ENCODE measurements at regions of chr2 and their contacts with region 1.

Region 1: GRCh38 chr2:197857476-197858107 is 53.2 kb downstream of the PLCL1 start:
- DNase-seq: no peak
- ATAC-seq: peak in 1 of 8 donors; percentile 27
- H3K4me3 ChIP-seq: no peak overlapping the region
- H3K27ac ChIP-seq: peak overlapping the region in 1 of 10 donors; percentile 17
- H3K4me1 ChIP-seq: peaks cover 0 to 55% (median 19%) of the 10 kb centered on the region in 9 donors
- H3K27me3 ChIP-seq: no peaks in the 10 kb centered on the region
- CTCF ChIP-seq: no peak

Region 2: GRCh38 chr2:198441246-198441645 is 583.7 kb after region 1 on chr2:
- intact Hi-C with region 1: loop called in 1 of 10 experiments (anchors 5 kb)
- DNase-seq: no peak
- ATAC-seq: no peak
- H3K4me3 ChIP-seq: no peak overlapping the region
- H3K27ac ChIP-seq: no peak overlapping the region
- H3K4me1 ChIP-seq: no peaks in the 10 kb centered on the region
- H3K27me3 ChIP-seq: peaks cover 0 to 6% (median 0%) of the 10 kb centered on the region in 7 donors
- CTCF ChIP-seq: no peak